ENCODE measurements at regions of chr15 and their contacts with region 1.

Region 1: DNA sequence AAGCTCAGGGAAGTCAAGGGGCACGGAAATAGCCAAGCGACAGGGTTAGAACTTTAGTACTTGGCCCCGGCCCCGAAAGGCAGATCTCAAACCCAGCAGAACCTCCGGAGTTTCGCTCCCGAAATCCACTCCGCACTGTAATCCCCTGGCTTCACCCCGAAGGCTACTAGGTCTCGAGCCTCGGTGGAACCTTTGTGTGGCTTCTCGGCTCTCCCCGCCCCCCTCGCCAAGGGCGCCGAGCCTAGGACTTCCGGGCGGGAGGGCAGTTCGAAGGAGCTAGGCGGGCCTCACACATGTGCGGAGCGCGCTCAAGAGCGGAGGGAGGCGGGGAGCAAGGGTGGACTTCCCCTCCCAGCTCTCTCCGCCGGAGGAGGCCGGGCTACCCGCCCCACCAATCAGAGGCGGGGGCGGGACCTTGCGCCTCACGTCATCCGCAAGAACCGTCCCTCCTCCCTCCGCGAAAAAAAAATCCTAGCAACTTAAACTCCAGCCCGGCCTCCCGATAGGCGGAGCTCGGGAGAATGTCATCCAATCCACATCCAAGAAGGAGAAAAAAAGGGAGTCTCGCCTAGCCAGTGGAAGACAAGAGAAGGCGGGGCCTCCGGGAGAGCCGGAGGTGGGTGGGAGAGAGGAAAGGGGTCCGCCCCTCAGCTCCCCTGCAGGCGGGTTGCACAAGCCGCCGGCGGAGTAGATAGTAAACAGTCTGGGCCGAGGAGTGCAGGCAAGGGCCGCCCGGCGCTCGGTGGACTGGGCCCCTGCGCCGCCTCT is 2.4 kb upstream of the SIN3A start:
- DNase-seq: peak; percentile 98
- ATAC-seq: peak; percentile 40
- H3K4me3 Mint-ChIP-seq: peak overlapping the region; percentile 99
- H3K27ac Mint-ChIP-seq: peak overlapping the region; percentile 96
- H3K4me1 Mint-ChIP-seq: peaks cover 18% of the 10 kb centered on the region
- H3K27me3 Mint-ChIP-seq: no peaks in the 10 kb centered on the region

Region 2: GRCh38 chr15:74615508-74616365 is 838.1 kb before region 1 on chr15 and contains the start of gene CLK3:
- CTCF ChIA-PET with region 1: no interaction called
- POLR2A ChIA-PET with region 1: no interaction called
- intact Hi-C with region 1: loop called (anchors 1 to 2 kb)
- DNase-seq: peak; percentile 99
- ATAC-seq: peak; percentile 90
- H3K4me3 Mint-ChIP-seq: peak within 1 kb of the TSS; percentile 93
- H3K27ac Mint-ChIP-seq: peak within 1 kb of the TSS; percentile 95
- H3K4me1 Mint-ChIP-seq: peaks cover 42% of the 10 kb centered on the region
- H3K27me3 Mint-ChIP-seq: no peaks in the 10 kb centered on the region
- total RNA-seq, gene CLK3: 130 to 175 TPM

Region 3: GRCh38 chr15:74873036-74873755 is 580.7 kb before region 1 on chr15 and contains the start of gene SCAMP2:
- CTCF ChIA-PET with region 1: no interaction called
- POLR2A ChIA-PET with region 1: interaction called, 3 read pairs
- intact Hi-C with region 1: loop called in 1 of 2 experiments (anchors 2 kb)
- DNase-seq: peak; percentile 94
- ATAC-seq: peak; percentile 84
- H3K4me3 Mint-ChIP-seq: peak within 1 kb of the TSS; percentile 87
- H3K27ac Mint-ChIP-seq: peak within 1 kb of the TSS; percentile 87
- H3K4me1 Mint-ChIP-seq: peaks cover 48% of the 10 kb centered on the region
- H3K27me3 Mint-ChIP-seq: no peaks in the 10 kb centered on the region
- total RNA-seq, gene SCAMP2: 61.6 to 83.4 TPM

Region 4: GRCh38 chr15:75201609-75202250 is 252.2 kb before region 1 on chr15 and contains the start of gene C15orf39:
- CTCF ChIA-PET with region 1: no interaction called
- POLR2A ChIA-PET with region 1: interaction called, 3 read pairs
- intact Hi-C with region 1: loop called (anchors 1 to 5 kb)
- DNase-seq: peak; percentile 87
- ATAC-seq: peak; percentile 57
- H3K4me3 Mint-ChIP-seq: peak within 1 kb of the TSS; percentile 86
- H3K27ac Mint-ChIP-seq: peak within 1 kb of the TSS; percentile 89
- H3K4me1 Mint-ChIP-seq: peaks cover 34% of the 10 kb centered on the region
- H3K27me3 Mint-ChIP-seq: no peaks in the 10 kb centered on the region
- total RNA-seq, gene C15orf39: 18.6 to 25.1 TPM

Region 5: GRCh38 chr15:75578948-75579920 is 125.3 kb after region 1 on chr15 and contains the start of gene PTPN9:
- CTCF ChIA-PET with region 1: no interaction called
- POLR2A ChIA-PET with region 1: interaction called, 3 read pairs
- intact Hi-C with region 1: loop called (anchors 1 to 5 kb)
- DNase-seq: peak; percentile 88
- ATAC-seq: peak; percentile 80
- H3K4me3 Mint-ChIP-seq: peak within 1 kb of the TSS; percentile 87
- H3K27ac Mint-ChIP-seq: peak within 1 kb of the TSS; percentile 94
- H3K4me1 Mint-ChIP-seq: peaks cover 13% of the 10 kb centered on the region
- H3K27me3 Mint-ChIP-seq: no peaks in the 10 kb centered on the region
- total RNA-seq, gene PTPN9: 15.0 to 16.5 TPM

Region 6: GRCh38 chr15:75842722-75843551 is 389.1 kb after region 1 on chr15 and contains the start of gene UBE2Q2:
- CTCF ChIA-PET with region 1: no interaction called
- POLR2A ChIA-PET with region 1: no interaction called
- intact Hi-C with region 1: loop called in 1 of 2 experiments (anchors 2 kb)
- DNase-seq: peak; percentile 85
- ATAC-seq: peak; percentile 63
- H3K4me3 Mint-ChIP-seq: peak within 1 kb of the TSS; percentile 90
- H3K27ac Mint-ChIP-seq: peak within 1 kb of the TSS; percentile 83
- H3K4me1 Mint-ChIP-seq: peaks cover 34% of the 10 kb centered on the region
- H3K27me3 Mint-ChIP-seq: peaks cover 9% of the 10 kb centered on the region
- total RNA-seq, gene UBE2Q2: 14.9 to 15.1 TPM

Region 7: GRCh38 chr15:76084256-76084655 is 630.4 kb after region 1 on chr15:
- CTCF ChIA-PET with region 1: no interaction called
- POLR2A ChIA-PET with region 1: no interaction called
- intact Hi-C with region 1: no loop called
- DNase-seq: no peak
- ATAC-seq: no peak
- H3K4me3 Mint-ChIP-seq: no peak overlapping the region
- H3K27ac Mint-ChIP-seq: no peak overlapping the region
- H3K4me1 Mint-ChIP-seq: no peaks in the 10 kb centered on the region
- H3K27me3 Mint-ChIP-seq: peaks cover 22% of the 10 kb centered on the region

Region 8: GRCh38 chr15:76217029-76217428 is 763.1 kb after region 1 on chr15:
- CTCF ChIA-PET with region 1: no interaction called
- POLR2A ChIA-PET with region 1: no interaction called
- intact Hi-C with region 1: no loop called
- DNase-seq: no peak
- ATAC-seq: no peak
- H3K4me3 Mint-ChIP-seq: no peak overlapping the region
- H3K27ac Mint-ChIP-seq: no peak overlapping the region
- H3K4me1 Mint-ChIP-seq: no peaks in the 10 kb centered on the region
- H3K27me3 Mint-ChIP-seq: no peaks in the 10 kb centered on the region

Region 9: GRCh38 chr15:77419836-77420609 is 1966.1 kb after region 1 on chr15 and contains the start of gene PEAK1:
- CTCF ChIA-PET with region 1: no interaction called
- POLR2A ChIA-PET with region 1: no interaction called
- intact Hi-C with region 1: loop called in 1 of 2 experiments (anchors 2 kb)
- DNase-seq: peak; percentile 100
- ATAC-seq: peak; percentile 99
- H3K4me3 Mint-ChIP-seq: peak within 1 kb of the TSS; percentile 95
- H3K27ac Mint-ChIP-seq: peak within 1 kb of the TSS; percentile 100
- H3K4me1 Mint-ChIP-seq: peaks cover 44% of the 10 kb centered on the region
- H3K27me3 Mint-ChIP-seq: no peaks in the 10 kb centered on the region
- total RNA-seq, gene PEAK1: 26.5 to 27.0 TPM